CD4-positive, alpha-beta memory T cell (primary cell): ENCODE measurements at regions of chr5 and their contacts with region 1.

Region 1: GRCh38 chr5:50697421-50698138 is 31.1 kb downstream of the PARP8 start:
- DNase-seq: no peak
- H3K4me3 ChIP-seq: no peak overlapping the region
- H3K4me3 Mint-ChIP-seq: peak overlapping the region in 3 of 8 donors; percentile 26 to 37 (median 32)
- H3K27ac ChIP-seq: no peak overlapping the region
- H3K27ac Mint-ChIP-seq: peak overlapping the region in 5 of 7 donors; percentile 65 to 81 (median 79)
- H3K4me1 ChIP-seq: peaks cover 92% of the 10 kb centered on the region
- H3K4me1 Mint-ChIP-seq: peaks cover 57 to 83% (median 65%) of the 10 kb centered on the region in 4 donors
- H3K27me3 ChIP-seq: no peaks in the 10 kb centered on the region
- H3K27me3 Mint-ChIP-seq: no peaks in the 10 kb centered on the region

Region 2: GRCh38 chr5:50684721-50685120 is 12.9 kb before region 1 on chr5:
- CTCF ChIA-PET with region 1: no interaction called
- POLR2A ChIA-PET with region 1: interaction called, 4 read pairs
- intact Hi-C with region 1: loop called (anchors 2 kb)
- DNase-seq: no peak
- H3K4me3 ChIP-seq: no peak overlapping the region
- H3K4me3 Mint-ChIP-seq: peak overlapping the region in 1 of 8 donors; percentile 30
- H3K27ac ChIP-seq: no peak overlapping the region
- H3K27ac Mint-ChIP-seq: no peak overlapping the region
- H3K4me1 ChIP-seq: peaks cover 68% of the 10 kb centered on the region
- H3K4me1 Mint-ChIP-seq: peaks cover 38 to 76% (median 54%) of the 10 kb centered on the region in 4 donors
- H3K27me3 ChIP-seq: no peaks in the 10 kb centered on the region
- H3K27me3 Mint-ChIP-seq: no peaks in the 10 kb centered on the region

Region 3: GRCh38 chr5:50744776-50745175 is 47.2 kb after region 1 on chr5:
- CTCF ChIA-PET with region 1: no interaction called
- POLR2A ChIA-PET with region 1: interaction called, 5 read pairs
- intact Hi-C with region 1: loop called (anchors 10 kb)
- DNase-seq: peak; percentile 25 to 47 (median 32)
- H3K4me3 ChIP-seq: peak overlapping the region; percentile 6 to 32
- H3K4me3 Mint-ChIP-seq: peak overlapping the region; percentile 78 to 94 (median 89)
- H3K27ac ChIP-seq: peak overlapping the region; percentile 56
- H3K27ac Mint-ChIP-seq: peak overlapping the region; percentile 80 to 97 (median 94)
- H3K4me1 ChIP-seq: peaks cover 82% of the 10 kb centered on the region
- H3K4me1 Mint-ChIP-seq: peaks cover 64 to 85% (median 71%) of the 10 kb centered on the region in 4 donors
- H3K27me3 ChIP-seq: no peaks in the 10 kb centered on the region
- H3K27me3 Mint-ChIP-seq: no peaks in the 10 kb centered on the region